Psoas muscle (tissue), 8 donors: ENCODE measurements at regions of chr3 and their contacts with region 1.

Region 1: DNA sequence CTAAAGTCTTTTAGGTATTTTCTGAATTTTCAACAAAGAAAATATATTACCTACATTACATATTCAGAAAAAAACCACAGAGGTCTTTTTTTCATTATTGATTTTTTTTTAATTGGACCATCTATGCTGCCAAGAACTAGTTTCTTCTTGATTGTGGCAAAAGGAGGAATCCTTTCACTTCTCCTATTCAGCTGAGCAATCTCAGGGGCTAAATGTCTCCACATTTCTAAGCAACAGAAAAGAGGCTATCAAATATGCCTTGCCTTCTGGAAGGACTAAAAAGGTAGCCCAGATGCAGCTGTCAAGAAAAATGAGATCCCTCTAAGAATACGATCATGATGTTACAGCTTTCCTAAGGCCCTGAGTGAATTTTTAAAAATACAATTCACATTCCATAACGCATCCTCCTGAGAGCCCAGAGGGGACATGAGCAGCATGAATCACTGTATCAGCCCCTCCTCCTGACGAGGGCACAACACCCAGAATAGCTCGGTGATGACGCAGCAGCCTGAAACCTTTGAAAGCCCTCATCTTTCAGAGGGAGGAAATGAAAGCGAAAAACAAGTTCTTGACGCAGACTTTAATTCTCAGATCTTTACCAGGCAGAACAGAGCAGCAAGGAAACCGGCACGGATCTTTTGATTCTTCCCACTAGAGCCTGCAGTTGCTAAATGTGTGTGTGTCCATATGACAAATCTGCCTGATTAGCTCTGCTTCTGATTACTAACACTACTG is 24.6 kb downstream of the RUBCN start:
- DNase-seq: peak; percentile 88 to 93
- ATAC-seq: peak; percentile 87 to 94 (median 89)
- H3K4me3 ChIP-seq: peak overlapping the region; percentile 53
- H3K27ac ChIP-seq: peak overlapping the region; percentile 93
- H3K4me1 ChIP-seq: peaks cover 28% of the 10 kb centered on the region
- H3K27me3 ChIP-seq: no peaks in the 10 kb centered on the region
- CTCF ChIP-seq: no peak

Region 2: GRCh38 chr3:197292083-197292646 is 420.0 kb before region 1 on chr3:
- intact Hi-C with region 1: no loop called
- DNase-seq: no peak
- ATAC-seq: peak; percentile 44 to 81 (median 56)
- H3K4me3 ChIP-seq: peak overlapping the region; percentile 23
- H3K27ac ChIP-seq: peak overlapping the region; percentile 72
- H3K4me1 ChIP-seq: peaks cover 59% of the 10 kb centered on the region
- H3K27me3 ChIP-seq: no peaks in the 10 kb centered on the region
- CTCF ChIP-seq: no peak

Region 3: GRCh38 chr3:197599089-197599765 is 112.9 kb before region 1 on chr3:
- intact Hi-C with region 1: no loop called
- DNase-seq: peak; percentile 75 to 78
- ATAC-seq: peak; percentile 81 to 93 (median 85)
- H3K4me3 ChIP-seq: no peak overlapping the region
- H3K27ac ChIP-seq: no peak overlapping the region
- H3K4me1 ChIP-seq: no peaks in the 10 kb centered on the region
- H3K27me3 ChIP-seq: no peaks in the 10 kb centered on the region
- CTCF ChIP-seq: peak; percentile 89

Region 4: DNA sequence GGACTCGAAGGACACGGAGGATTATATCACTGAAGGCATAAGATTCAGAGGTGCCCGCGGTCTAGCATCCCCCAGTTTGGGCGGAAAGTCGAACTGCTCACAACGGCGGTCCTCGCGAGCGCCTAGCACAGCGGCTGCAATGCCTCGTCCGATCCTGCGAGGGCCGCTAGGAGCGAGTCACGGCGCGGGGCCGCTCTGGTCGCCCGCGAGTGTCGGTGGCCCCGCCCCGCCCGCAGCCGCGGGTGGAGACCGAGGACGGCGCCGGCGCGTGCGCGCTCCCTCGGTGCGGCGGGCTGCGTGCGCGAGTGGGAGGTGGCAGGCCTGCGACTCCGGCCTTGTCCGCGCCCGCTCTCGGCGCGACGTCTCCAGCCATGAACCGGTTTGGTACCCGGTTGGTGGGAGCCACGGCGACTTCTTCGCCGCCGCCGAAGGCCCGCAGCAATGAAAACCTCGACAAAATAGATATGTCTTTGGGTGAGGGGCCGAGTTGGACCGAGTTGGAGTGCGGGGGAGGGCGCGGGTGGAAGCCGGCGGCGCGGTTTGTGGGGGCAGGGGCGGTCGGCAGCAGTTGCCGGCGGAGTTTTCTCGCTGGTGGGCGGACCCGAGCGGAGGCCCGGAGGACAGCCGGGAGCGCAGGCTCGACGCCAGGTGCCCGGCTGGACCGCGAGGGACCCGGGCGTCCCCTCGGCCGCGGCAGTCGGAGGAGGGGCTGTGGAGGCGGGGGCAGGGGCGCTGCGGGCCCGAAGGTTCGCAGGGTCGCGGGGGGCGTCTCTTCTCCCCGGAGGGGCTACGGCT is 37.7 kb after region 1 on chr3 and contains the start of gene FYTTD1:
- intact Hi-C with region 1: loop called (anchors 1 to 2 kb)
- DNase-seq: peak; percentile 94 to 97
- ATAC-seq: peak; percentile 83 to 87 (median 86)
- H3K4me3 ChIP-seq: peak within 1 kb of the TSS; percentile 92
- H3K27ac ChIP-seq: peak within 1 kb of the TSS; percentile 99
- H3K4me1 ChIP-seq: peaks cover 54% of the 10 kb centered on the region
- H3K27me3 ChIP-seq: no peaks in the 10 kb centered on the region
- CTCF ChIP-seq: peak; percentile 55
- total RNA-seq, gene FYTTD1: 143 to 232 (median 157) TPM